Activated CD4-positive, alpha-beta memory T cell treated with anti-CD3 and anti-CD28 coated beads for 36 hours (primary cell): ENCODE measurements at regions of chr2 and their contacts with region 1.

Region 1: DNA sequence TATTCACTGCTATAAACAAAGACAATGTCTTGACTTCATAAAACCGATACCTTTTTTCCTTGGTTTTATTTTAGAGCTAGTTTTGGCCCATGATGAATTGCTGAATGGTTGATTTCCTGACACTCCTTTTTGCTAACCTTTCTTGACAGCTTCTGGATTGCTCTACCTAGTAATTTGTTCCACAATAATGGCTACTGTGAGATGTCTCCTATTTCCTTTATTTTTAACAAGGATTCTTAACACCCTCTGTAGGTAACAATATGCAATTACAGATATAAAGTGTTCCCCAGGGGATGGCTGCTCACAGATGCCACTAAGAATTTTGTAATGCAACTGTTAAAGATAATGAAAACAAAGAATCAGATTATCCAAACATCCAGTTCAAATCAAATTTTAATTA is 100.8 kb upstream of the ATP5MC3 start:
- DNase-seq: no peak
- H3K4me3 Mint-ChIP-seq: no peak overlapping the region
- H3K27ac Mint-ChIP-seq: no peak overlapping the region
- H3K4me1 Mint-ChIP-seq: peaks cover 3% of the 10 kb centered on the region
- H3K27me3 Mint-ChIP-seq: peaks cover 3% of the 10 kb centered on the region

Region 2: GRCh38 chr2:175036582-175037018 is 245.7 kb before region 1 on chr2:
- CTCF ChIA-PET with region 1: interaction called, 3 read pairs
- POLR2A ChIA-PET with region 1: no interaction called
- intact Hi-C with region 1: loop called (anchors 1 kb)
- DNase-seq: no peak
- H3K4me3 Mint-ChIP-seq: no peak overlapping the region
- H3K27ac Mint-ChIP-seq: no peak overlapping the region
- H3K4me1 Mint-ChIP-seq: peaks cover 6% of the 10 kb centered on the region
- H3K27me3 Mint-ChIP-seq: no peaks in the 10 kb centered on the region

Region 3: DNA sequence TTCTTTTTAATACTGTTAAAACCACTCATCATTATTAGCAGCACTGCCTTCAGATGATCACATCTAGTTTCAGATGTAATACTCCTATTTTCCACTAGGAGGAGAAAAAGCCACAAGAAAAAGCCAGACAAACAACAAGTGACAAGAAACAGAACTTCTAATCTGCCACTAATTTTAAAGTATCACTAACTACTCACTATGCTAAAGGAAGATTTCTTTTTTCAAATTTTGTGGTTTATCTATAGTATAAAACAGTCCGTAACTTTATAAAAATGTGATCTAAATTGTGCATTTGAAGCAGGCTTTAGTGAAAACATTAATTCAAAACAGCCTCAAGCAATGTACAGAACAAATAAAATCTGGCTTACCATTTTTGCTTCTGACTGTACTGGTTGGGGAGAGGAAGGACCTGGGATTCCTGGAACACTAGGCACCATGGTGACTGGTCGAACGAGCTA is 171.1 kb before region 1 on chr2:
- CTCF ChIA-PET with region 1: interaction called, 4 read pairs
- POLR2A ChIA-PET with region 1: no interaction called
- intact Hi-C with region 1: loop called (anchors 1 kb)
- DNase-seq: no peak
- H3K4me3 Mint-ChIP-seq: no peak overlapping the region
- H3K27ac Mint-ChIP-seq: no peak overlapping the region
- H3K4me1 Mint-ChIP-seq: no peaks in the 10 kb centered on the region
- H3K27me3 Mint-ChIP-seq: no peaks in the 10 kb centered on the region

Region 4: GRCh38 chr2:175203621-175204496 is 78.4 kb before region 1 on chr2:
- CTCF ChIA-PET with region 1: interaction called, 124 read pairs
- POLR2A ChIA-PET with region 1: no interaction called
- intact Hi-C with region 1: loop called (anchors 1 kb)
- DNase-seq: peak; percentile 76
- H3K4me3 Mint-ChIP-seq: no peak overlapping the region
- H3K27ac Mint-ChIP-seq: no peak overlapping the region
- H3K4me1 Mint-ChIP-seq: peaks cover 6% of the 10 kb centered on the region
- H3K27me3 Mint-ChIP-seq: peaks cover 14% of the 10 kb centered on the region